ENCODE measurements at regions of chr18 and their contacts with region 1.

Region 1: GRCh38 chr18:9474983-9475642 is at the start of gene RALBP1:
- DNase-seq: peak; percentile 99
- ATAC-seq: peak; percentile 98
- H3K4me3 Mint-ChIP-seq: peak within 1 kb of the TSS; percentile 85
- H3K27ac Mint-ChIP-seq: peak within 1 kb of the TSS; percentile 92
- H3K4me1 Mint-ChIP-seq: peaks cover 16% of the 10 kb centered on the region
- H3K27me3 Mint-ChIP-seq: peaks cover 8% of the 10 kb centered on the region
- total RNA-seq, gene RALBP1: 49.4 to 51.1 TPM

Region 2: GRCh38 chr18:8608795-8609658 is 866.1 kb before region 1 on chr18 and contains the start of gene RAB12:
- CTCF ChIA-PET with region 1: no interaction called
- POLR2A ChIA-PET with region 1: no interaction called
- intact Hi-C with region 1: loop called in 1 of 2 experiments (anchors 1 kb)
- DNase-seq: peak; percentile 92
- ATAC-seq: peak; percentile 88
- H3K4me3 Mint-ChIP-seq: peak within 1 kb of the TSS; percentile 90
- H3K27ac Mint-ChIP-seq: peak within 1 kb of the TSS; percentile 91
- H3K4me1 Mint-ChIP-seq: peaks cover 47% of the 10 kb centered on the region
- H3K27me3 Mint-ChIP-seq: no peaks in the 10 kb centered on the region
- total RNA-seq, gene RAB12: 12.4 to 12.8 TPM

Region 3: GRCh38 chr18:9017170-9017904 is 457.8 kb before region 1 on chr18:
- CTCF ChIA-PET with region 1: no interaction called
- POLR2A ChIA-PET with region 1: no interaction called
- intact Hi-C with region 1: loop called in 1 of 2 experiments (anchors 1 kb)
- DNase-seq: peak; percentile 92
- ATAC-seq: peak; percentile 100
- H3K4me3 Mint-ChIP-seq: peak overlapping the region; percentile 42
- H3K27ac Mint-ChIP-seq: peak overlapping the region; percentile 72
- H3K4me1 Mint-ChIP-seq: peaks cover 14% of the 10 kb centered on the region
- H3K27me3 Mint-ChIP-seq: no peaks in the 10 kb centered on the region

Region 4: GRCh38 chr18:9102508-9103375 is 372.4 kb before region 1 on chr18 and contains the start of gene NDUFV2:
- CTCF ChIA-PET with region 1: no interaction called
- POLR2A ChIA-PET with region 1: no interaction called
- intact Hi-C with region 1: loop called (anchors 1 to 5 kb)
- DNase-seq: peak; percentile 99
- ATAC-seq: peak; percentile 88
- H3K4me3 Mint-ChIP-seq: peak within 1 kb of the TSS; percentile 89
- H3K27ac Mint-ChIP-seq: peak within 1 kb of the TSS; percentile 97
- H3K4me1 Mint-ChIP-seq: peaks cover 40% of the 10 kb centered on the region
- H3K27me3 Mint-ChIP-seq: no peaks in the 10 kb centered on the region
- total RNA-seq, gene NDUFV2: 331 to 372 TPM

Region 5: GRCh38 chr18:9334329-9334972 is 140.7 kb before region 1 on chr18 and contains the start of gene TWSG1:
- CTCF ChIA-PET with region 1: no interaction called
- POLR2A ChIA-PET with region 1: no interaction called
- intact Hi-C with region 1: loop called (anchors 1 to 2 kb)
- DNase-seq: peak; percentile 95
- ATAC-seq: peak; percentile 86
- H3K4me3 Mint-ChIP-seq: peak within 1 kb of the TSS; percentile 82
- H3K27ac Mint-ChIP-seq: peak within 1 kb of the TSS; percentile 67
- H3K4me1 Mint-ChIP-seq: peaks cover 22% of the 10 kb centered on the region
- H3K27me3 Mint-ChIP-seq: peaks cover 3% of the 10 kb centered on the region
- total RNA-seq, gene TWSG1: 7.9 to 8.8 TPM

Region 6: GRCh38 chr18:9614401-9615279 is 139.5 kb after region 1 on chr18 and contains the start of gene PPP4R1:
- CTCF ChIA-PET with region 1: no interaction called
- POLR2A ChIA-PET with region 1: no interaction called
- intact Hi-C with region 1: loop called (anchors 1 to 2 kb)
- DNase-seq: peak; percentile 84
- ATAC-seq: peak; percentile 57
- H3K4me3 Mint-ChIP-seq: peak within 1 kb of the TSS; percentile 93
- H3K27ac Mint-ChIP-seq: peak within 1 kb of the TSS; percentile 79
- H3K4me1 Mint-ChIP-seq: peaks cover 29% of the 10 kb centered on the region
- H3K27me3 Mint-ChIP-seq: no peaks in the 10 kb centered on the region
- total RNA-seq, gene PPP4R1: 32.2 to 33.3 TPM

Measured in activated CD4-positive, alpha-beta T cell treated with anti-CD3 and anti-CD28 coated beads for 36 hours (primary cell).